H1 (cell line): ENCODE measurements at regions of chr15 and their contacts with region 1.

Region 1: GRCh38 chr15:49343546-49343945 is 79.5 kb upstream of the FGF7 start:
- DNase-seq: no peak
- H3K4me3 ChIP-seq: no peak overlapping the region
- H3K27ac ChIP-seq: no peak overlapping the region
- H3K4me1 ChIP-seq: peaks cover 0 to 5% (median under 1%) of the 10 kb centered on the region in 4 experiments; a peak in 3 of 7 replicates
- H3K27me3 ChIP-seq: no peaks in the 10 kb centered on the region
- CTCF ChIP-seq: no peak
- EP300 ChIP-seq: no peak
- POLR2A ChIP-seq: no peak
- RAD21 ChIP-seq: no peak

Region 2: DNA sequence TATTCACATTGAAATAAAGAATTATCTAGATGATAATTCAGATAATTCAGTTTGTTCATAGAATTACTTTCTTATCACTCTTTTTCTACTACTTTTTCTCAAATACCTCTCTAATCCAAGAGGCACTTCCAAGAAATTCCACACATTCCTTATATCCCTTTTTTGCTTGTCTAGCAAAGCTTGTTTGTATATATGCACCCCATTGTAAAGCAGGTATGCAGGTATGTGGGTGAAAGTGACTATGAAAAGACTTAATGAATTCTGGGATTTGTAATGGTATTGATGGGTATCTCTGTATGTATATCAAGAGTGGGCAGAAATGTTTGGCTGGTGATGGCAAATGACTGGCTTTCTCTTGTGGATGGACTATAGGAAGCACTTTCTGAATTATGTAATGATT is 14.6 kb before region 1 on chr15:
- CTCF ChIA-PET with region 1: interaction called, 5 read pairs
- POLR2A ChIA-PET with region 1: interaction called, 12 read pairs
- DNase-seq: peak in 1 of 2 experiments; percentile 7
- H3K4me3 ChIP-seq: peak overlapping the region in 1 of 4 experiments; percentile 39; a peak in 1 of 8 replicates
- H3K27ac ChIP-seq: no peak overlapping the region; the same call in 1 of the 2 replicates
- H3K4me1 ChIP-seq: peaks cover 0 to 18% (median 10%) of the 10 kb centered on the region in 4 experiments; a peak in 4 of 7 replicates
- H3K27me3 ChIP-seq: no peaks in the 10 kb centered on the region
- CTCF ChIP-seq: no peak
- EP300 ChIP-seq: peak in 1 of 2 experiments; percentile 61; a peak in 1 of 3 replicates
- POLR2A ChIP-seq: no peak
- RAD21 ChIP-seq: no peak